Activated T-helper 2 cell treated with anti-CD3 and anti-CD28 coated beads, Interferon-gamma antibody, Interleukin-2, Interleukin-4, amounts not matched to agents 10 μg/mL and 5 μg/mL and 100 μg/mL, durations not matched to agents 14 hours and 24 hours and 36 hours (primary cell): ENCODE measurements at regions of chr14 and their contacts with region 1.

Region 1: GRCh38 chr14:89416002-89416995 is 734 bp downstream of the FOXN3 start:
- DNase-seq: peak; percentile 99
- H3K4me3 Mint-ChIP-seq: peak overlapping the region; percentile 93
- H3K27ac Mint-ChIP-seq: peak overlapping the region; percentile 88
- H3K4me1 Mint-ChIP-seq: peaks cover 48% of the 10 kb centered on the region
- H3K27me3 Mint-ChIP-seq: no peaks in the 10 kb centered on the region

Region 2: GRCh38 chr14:89027097-89027740 is 389.1 kb before region 1 on chr14:
- intact Hi-C with region 1: loop called (anchors 5 kb)
- DNase-seq: peak; percentile 44
- H3K4me3 Mint-ChIP-seq: peak overlapping the region; percentile 71
- H3K27ac Mint-ChIP-seq: no peak overlapping the region
- H3K4me1 Mint-ChIP-seq: no peaks in the 10 kb centered on the region
- H3K27me3 Mint-ChIP-seq: peaks cover 56% of the 10 kb centered on the region

Region 3: GRCh38 chr14:89178802-89179535 is 237.3 kb before region 1 on chr14:
- intact Hi-C with region 1: loop called (anchors 2 kb)
- DNase-seq: no peak
- H3K4me3 Mint-ChIP-seq: no peak overlapping the region
- H3K27ac Mint-ChIP-seq: no peak overlapping the region
- H3K4me1 Mint-ChIP-seq: peaks cover 4% of the 10 kb centered on the region
- H3K27me3 Mint-ChIP-seq: no peaks in the 10 kb centered on the region

Region 4: DNA sequence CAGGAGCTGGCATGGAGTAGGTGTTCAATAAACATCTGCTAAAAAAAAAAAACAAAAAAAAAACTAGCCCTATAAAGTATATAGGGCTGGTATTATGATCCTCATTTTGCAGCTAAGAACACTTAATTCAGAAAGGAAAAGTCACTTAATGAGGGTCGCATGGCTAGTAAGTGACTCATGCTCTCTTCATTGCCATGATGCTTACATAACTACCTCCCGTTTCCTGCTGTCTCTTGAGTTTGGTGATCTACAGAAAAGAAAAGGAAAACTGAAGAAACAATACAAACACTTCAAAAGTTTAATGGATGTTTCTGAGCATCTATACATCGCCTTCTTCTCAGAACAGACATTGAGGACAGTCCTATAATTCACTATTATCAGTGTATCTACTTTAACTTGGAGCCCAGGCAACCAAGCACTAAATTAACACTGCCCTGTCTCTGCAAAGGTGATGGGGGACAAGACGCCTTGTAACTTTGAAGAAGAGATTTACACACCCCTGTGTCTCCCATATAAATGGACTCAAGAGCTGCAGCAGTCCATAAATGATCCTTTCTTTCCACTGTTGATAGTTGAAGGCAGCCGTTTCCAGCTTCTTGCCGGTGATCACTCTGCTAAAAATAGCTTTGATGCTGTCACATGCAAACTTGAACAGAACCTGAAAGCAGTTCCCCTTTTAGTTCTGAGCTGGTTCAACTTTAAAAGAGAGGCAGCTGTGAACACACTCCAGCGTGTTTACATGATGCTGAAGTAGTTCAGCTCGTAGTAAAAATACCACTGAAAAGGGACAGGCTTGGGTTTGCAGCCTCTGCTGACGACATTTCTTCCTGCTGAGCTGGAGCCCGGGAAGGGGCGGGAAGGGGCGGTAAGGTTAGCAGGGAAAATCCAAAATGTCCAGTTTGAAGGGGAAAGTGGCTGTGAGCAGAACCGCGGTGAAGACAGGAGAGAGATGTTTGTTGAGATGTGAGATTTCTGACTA is 112.6 kb before region 1 on chr14:
- intact Hi-C with region 1: loop called (anchors 5 kb)
- DNase-seq: no peak
- H3K4me3 Mint-ChIP-seq: peak overlapping the region; percentile 63
- H3K27ac Mint-ChIP-seq: peak overlapping the region; percentile 95
- H3K4me1 Mint-ChIP-seq: peaks cover 45% of the 10 kb centered on the region
- H3K27me3 Mint-ChIP-seq: no peaks in the 10 kb centered on the region

Region 5: DNA sequence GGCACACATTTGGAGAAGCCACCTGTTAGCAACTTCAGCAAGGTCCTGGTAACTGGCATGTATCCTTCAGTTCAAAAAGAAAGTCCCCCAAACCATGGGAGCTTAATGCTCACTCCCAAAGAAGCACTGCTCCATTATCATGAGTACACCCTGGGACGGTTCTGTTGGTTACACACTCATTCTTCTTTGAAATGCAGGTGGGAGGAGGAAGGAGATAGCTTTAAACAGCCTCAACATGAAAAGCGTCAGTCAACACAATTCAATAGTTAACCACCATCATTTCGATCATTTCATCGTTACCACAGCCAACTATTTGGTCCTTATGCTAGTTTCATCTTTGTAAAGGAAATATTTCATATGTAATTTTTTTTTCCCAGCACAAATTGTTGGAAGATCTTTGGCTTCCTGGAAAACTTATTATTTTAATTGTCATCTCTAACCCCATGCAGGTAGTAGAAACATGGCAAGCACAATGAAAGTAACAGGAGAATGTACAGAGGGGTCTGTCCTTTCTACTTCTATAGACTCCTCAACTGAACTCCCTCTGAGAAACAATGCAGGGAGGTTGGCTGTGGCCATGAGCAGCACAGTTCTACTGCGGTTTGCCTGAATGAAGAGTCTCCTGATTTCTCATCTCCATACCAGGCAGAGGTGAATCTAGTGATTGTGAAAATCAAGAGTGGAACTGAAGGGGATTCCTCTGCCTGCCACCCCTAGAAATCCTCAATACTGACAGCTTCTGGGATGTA is 197.1 kb after region 1 on chr14:
- intact Hi-C with region 1: loop called (anchors 1 kb)
- DNase-seq: no peak
- H3K4me3 Mint-ChIP-seq: peak overlapping the region; percentile 59
- H3K27ac Mint-ChIP-seq: peak overlapping the region; percentile 86
- H3K4me1 Mint-ChIP-seq: peaks cover 69% of the 10 kb centered on the region
- H3K27me3 Mint-ChIP-seq: no peaks in the 10 kb centered on the region

Region 6: DNA sequence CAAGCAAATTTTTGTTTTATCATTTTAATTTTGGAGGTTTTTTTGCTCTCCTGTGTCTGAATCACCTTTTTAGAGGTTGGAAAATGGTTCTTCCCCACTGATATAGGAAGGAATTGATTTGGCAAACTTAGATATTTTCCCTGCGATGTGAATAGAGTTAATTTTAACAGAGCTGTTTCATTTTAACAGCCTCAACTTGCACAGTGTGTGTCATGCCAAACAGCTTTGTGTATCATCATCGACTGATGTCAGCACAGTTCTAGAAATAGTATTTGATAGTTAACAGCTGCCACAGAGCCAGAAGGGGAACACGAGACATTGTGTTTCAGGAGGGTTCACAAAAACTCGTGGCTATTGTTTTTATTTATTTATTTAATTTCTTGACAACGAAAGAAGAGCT is 243.9 kb after region 1 on chr14:
- intact Hi-C with region 1: no loop called
- DNase-seq: no peak
- H3K4me3 Mint-ChIP-seq: no peak overlapping the region
- H3K27ac Mint-ChIP-seq: no peak overlapping the region
- H3K4me1 Mint-ChIP-seq: peaks cover 19% of the 10 kb centered on the region
- H3K27me3 Mint-ChIP-seq: no peaks in the 10 kb centered on the region

Region 7: DNA sequence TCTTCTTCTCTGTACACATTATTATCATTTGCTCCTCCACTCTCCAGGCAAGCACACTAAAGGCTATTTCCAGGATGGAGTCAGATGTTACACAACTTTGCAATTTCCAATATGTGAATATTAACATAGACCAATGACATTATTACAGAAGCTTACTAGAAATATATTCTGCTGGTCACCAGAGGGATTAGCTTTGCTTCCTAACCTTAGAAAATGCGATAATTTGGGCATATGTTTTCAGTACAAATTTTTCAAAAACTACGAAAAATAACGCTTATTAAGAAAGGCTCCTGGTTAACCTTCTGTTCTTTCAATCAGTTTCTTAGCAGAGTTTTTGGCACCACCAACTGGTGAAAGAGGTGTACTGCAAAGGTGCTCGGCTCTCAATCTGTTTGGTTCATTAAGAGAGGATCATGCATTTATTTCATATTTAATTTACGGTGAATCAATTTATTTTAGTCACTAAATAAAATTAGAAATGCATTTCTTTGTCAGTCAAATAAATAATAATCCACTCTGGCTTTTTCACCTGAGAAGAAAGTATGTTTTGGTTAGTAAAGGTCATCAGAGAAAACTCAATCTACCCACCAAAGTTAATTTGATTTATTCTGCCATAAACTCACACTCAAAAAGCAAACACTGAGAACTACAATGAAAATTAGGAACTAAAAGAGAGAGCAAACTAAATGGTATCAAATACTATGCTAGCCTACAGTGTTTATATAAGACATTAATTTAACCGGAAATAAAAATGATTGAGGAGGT is 499.0 kb after region 1 on chr14:
- intact Hi-C with region 1: loop called (anchors 10 kb)
- DNase-seq: peak; percentile 38
- H3K4me3 Mint-ChIP-seq: no peak overlapping the region
- H3K27ac Mint-ChIP-seq: no peak overlapping the region
- H3K4me1 Mint-ChIP-seq: no peaks in the 10 kb centered on the region
- H3K27me3 Mint-ChIP-seq: peaks cover 24% of the 10 kb centered on the region